Mucosa of descending colon (tissue), 3 donors: ENCODE measurements at regions of chr1 and their contacts with region 1.

Region 1: GRCh38 chr1:225977937-225978748 is 21.0 kb downstream of the SDE2 start:
- DNase-seq: no peak
- ATAC-seq: no peak
- H3K4me3 ChIP-seq: no peak overlapping the region
- H3K4me1 ChIP-seq: peaks cover 13% of the 10 kb centered on the region
- CTCF ChIP-seq: no peak

Region 2: GRCh38 chr1:225319871-225320270 is 658.3 kb before region 1 on chr1:
- intact Hi-C with region 1: loop called in 1 of 2 experiments (anchors 10 kb)
- DNase-seq: no peak
- ATAC-seq: no peak
- H3K4me3 ChIP-seq: no peak overlapping the region
- H3K4me1 ChIP-seq: no peaks in the 10 kb centered on the region
- CTCF ChIP-seq: no peak